PC-3 (cell line): ENCODE measurements at regions of chr11 and their contacts with region 1.

Region 1: DNA sequence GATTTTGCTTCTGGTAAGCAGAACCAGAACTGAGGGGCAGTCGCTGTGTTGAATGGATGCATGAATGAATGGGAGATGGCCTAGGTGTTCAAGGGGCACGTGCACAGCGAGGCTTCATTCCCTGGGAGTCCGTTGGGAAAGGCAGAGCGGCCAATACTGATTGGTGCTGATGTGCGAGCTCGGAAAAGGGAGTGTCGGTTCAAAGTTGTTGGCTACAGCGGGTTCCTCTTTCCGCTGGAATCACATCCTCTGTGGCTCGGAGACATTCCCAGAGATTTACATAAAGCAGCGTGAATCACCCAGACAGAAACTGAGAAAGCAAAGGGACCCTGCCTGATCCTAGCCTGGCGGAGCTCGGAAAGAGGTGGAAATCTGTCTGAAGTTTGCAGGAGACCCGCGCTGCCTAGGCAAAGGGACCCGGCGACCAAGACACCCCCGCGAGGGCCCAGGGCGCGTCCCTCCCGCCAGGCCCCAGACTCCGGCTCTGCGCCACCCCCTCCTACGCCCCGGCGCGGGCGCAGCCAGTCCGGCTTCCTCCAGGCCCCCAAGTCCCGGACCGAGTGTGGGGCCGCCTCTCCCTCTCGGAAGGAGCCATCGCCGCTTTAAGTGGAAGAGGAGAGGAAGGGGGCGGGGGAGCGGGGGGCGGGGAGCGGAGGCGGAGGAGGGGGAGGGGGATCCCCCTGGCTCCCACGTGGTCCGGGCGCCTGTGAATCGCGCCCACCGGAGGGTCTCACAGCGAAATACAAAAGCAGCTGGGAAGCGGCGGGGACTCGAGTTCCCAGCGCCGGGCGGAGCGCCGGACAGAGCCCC is at the start of gene FJX1:
- DNase-seq: peak; percentile 86
- ATAC-seq: peak; percentile 46
- H3K4me3 ChIP-seq: peak within 1 kb of the TSS; percentile 88
- H3K27ac ChIP-seq: peak within 1 kb of the TSS; percentile 93
- H3K4me1 ChIP-seq: peaks cover 53% of the 10 kb centered on the region
- H3K27me3 ChIP-seq: no peaks in the 10 kb centered on the region
- CTCF ChIP-seq: no peak
- total RNA-seq, gene FJX1: 71.4 and 97.1 TPM in 2 replicates

Region 2: GRCh38 chr11:34300026-34300925 is 1317.6 kb before region 1 on chr11:
- CTCF ChIA-PET with region 1: no interaction called
- POLR2A ChIA-PET with region 1: no interaction called
- intact Hi-C with region 1: no loop called
- DNase-seq: no peak
- ATAC-seq: no peak
- H3K4me3 ChIP-seq: no peak overlapping the region
- H3K27ac ChIP-seq: no peak overlapping the region
- H3K4me1 ChIP-seq: peaks cover 28% of the 10 kb centered on the region
- H3K27me3 ChIP-seq: no peaks in the 10 kb centered on the region
- CTCF ChIP-seq: no peak

Region 3: DNA sequence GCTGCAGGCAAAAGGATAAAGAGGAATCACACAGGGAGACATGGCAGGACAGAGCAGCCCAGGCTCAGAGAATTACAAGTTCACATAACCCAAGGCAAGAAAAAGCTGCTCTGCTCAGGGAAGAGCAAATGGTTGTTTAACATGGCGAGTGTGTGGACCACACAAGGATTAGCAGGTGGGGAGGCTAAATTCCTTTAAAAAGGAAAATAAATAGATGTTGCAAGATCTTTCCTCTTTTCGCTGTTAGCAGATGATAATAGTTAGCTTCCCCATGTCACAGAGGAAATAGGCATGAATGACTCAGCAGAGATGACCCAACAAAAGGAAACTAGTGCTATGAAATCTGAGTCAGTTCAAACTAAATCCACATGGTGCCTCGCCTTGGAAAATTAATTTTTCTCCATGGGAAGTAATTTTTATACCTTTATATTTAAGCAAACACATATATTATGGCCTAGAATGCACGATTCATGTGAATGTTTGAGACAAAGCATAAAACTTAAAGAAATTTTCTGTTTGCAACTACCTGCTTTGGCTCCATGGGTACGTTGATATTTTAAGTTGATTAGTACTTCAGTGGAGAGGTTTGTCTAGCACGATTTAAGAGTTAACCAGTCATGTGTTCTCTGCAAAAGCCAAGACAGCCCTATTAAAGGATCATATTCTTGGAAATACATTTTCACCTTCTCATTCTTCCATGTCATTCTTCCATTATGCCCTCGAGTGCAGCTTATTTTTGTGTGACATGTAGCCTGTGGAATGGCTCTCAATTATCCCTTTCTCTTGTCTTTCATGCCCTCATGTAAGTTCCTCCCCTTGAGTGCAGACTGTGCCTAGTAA is 38.1 kb before region 1 on chr11:
- CTCF ChIA-PET with region 1: no interaction called
- POLR2A ChIA-PET with region 1: no interaction called
- intact Hi-C with region 1: no loop called
- DNase-seq: peak; percentile 86
- ATAC-seq: peak; percentile 82
- H3K4me3 ChIP-seq: peak overlapping the region; percentile 54; the same call in 1 of the 2 replicates
- H3K27ac ChIP-seq: peak overlapping the region; percentile 84
- H3K4me1 ChIP-seq: peaks cover 33% of the 10 kb centered on the region
- H3K27me3 ChIP-seq: no peaks in the 10 kb centered on the region
- CTCF ChIP-seq: no peak

Region 4: GRCh38 chr11:35629914-35630313 is 12.0 kb after region 1 on chr11:
- CTCF ChIA-PET with region 1: no interaction called
- POLR2A ChIA-PET with region 1: interaction called, 4 read pairs
- intact Hi-C with region 1: loop called (anchors 1 kb)
- DNase-seq: peak; percentile 99
- ATAC-seq: peak; percentile 97
- H3K4me3 ChIP-seq: no peak overlapping the region
- H3K27ac ChIP-seq: peak overlapping the region; percentile 52
- H3K4me1 ChIP-seq: peaks cover 21% of the 10 kb centered on the region
- H3K27me3 ChIP-seq: no peaks in the 10 kb centered on the region
- CTCF ChIP-seq: no peak

Region 5: GRCh38 chr11:35721651-35722282 is 103.9 kb after region 1 on chr11:
- CTCF ChIA-PET with region 1: no interaction called
- POLR2A ChIA-PET with region 1: no interaction called
- intact Hi-C with region 1: loop called (anchors 5 kb)
- DNase-seq: no peak
- ATAC-seq: no peak
- H3K4me3 ChIP-seq: no peak overlapping the region
- H3K27ac ChIP-seq: no peak overlapping the region
- H3K4me1 ChIP-seq: peaks cover 10% of the 10 kb centered on the region
- H3K27me3 ChIP-seq: no peaks in the 10 kb centered on the region
- CTCF ChIP-seq: no peak

Region 6: DNA sequence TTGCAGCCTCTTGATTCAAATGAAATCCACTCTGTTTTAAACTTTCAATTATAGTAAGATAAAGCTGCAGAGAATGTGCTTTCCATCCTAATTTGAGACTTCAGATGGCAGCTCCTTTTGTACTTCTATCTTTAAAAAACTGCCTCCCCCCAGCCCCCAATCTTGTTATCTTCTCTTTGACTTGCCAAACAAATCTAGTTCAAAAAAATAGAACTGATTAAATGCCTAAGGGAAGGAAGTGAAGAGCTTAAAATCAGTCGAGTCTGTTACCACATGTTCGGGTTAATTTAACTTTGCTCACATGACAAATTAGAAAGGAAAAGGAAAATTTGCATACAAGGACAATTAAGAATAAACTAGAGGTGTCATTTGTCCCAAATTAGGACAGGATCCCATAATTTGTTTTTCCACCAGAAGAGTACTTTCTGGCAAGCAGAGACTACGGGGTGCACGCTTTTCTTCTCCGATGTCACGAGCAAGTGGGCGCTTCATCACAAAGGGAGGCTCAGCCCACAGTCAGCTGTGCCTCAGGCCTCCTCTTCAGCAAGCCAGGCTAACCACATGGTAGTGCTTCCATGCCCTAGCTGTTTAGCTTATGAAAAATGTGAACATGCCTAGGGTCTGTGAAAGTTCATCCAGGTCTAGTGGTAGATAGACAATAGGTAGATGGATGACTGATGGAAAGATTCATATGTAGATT is 257.0 kb after region 1 on chr11:
- CTCF ChIA-PET with region 1: no interaction called
- POLR2A ChIA-PET with region 1: no interaction called
- intact Hi-C with region 1: loop called (anchors 5 kb)
- DNase-seq: no peak
- ATAC-seq: no peak
- H3K4me3 ChIP-seq: no peak overlapping the region
- H3K27ac ChIP-seq: no peak overlapping the region
- H3K4me1 ChIP-seq: peaks cover 7% of the 10 kb centered on the region; the same call in 1 of the 2 replicates
- H3K27me3 ChIP-seq: no peaks in the 10 kb centered on the region
- CTCF ChIP-seq: no peak

Region 7: DNA sequence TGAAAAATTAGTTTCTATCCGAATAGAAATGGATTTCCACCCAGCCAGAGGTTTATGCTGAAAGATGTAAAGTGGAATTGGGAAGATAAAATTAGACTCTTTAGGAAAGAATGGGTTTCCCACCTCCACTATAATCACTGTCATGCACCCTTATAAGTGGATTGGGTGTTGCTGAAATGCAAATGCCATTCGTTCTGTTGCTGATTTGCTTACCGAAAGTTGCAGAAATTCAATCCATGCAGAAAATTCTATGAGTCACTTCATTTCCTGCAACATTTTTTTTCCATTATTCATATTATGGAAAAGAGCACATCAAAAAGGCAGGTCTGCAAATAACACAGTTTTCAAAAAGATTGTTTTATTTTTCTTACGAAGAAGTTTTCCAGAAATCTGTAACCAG is 391.6 kb after region 1 on chr11:
- CTCF ChIA-PET with region 1: no interaction called
- POLR2A ChIA-PET with region 1: no interaction called
- intact Hi-C with region 1: loop called (anchors 5 kb)
- DNase-seq: peak; percentile 69
- ATAC-seq: peak; percentile 29
- H3K4me3 ChIP-seq: peak overlapping the region; percentile 47
- H3K27ac ChIP-seq: peak overlapping the region; percentile 68
- H3K4me1 ChIP-seq: peaks cover 66% of the 10 kb centered on the region
- H3K27me3 ChIP-seq: no peaks in the 10 kb centered on the region
- CTCF ChIP-seq: no peak

Region 8: GRCh38 chr11:36149538-36150242 is 531.8 kb after region 1 on chr11:
- CTCF ChIA-PET with region 1: interaction called, 3 read pairs
- POLR2A ChIA-PET with region 1: no interaction called
- intact Hi-C with region 1: loop called (anchors 1 kb)
- DNase-seq: peak; percentile 99
- ATAC-seq: peak; percentile 96
- H3K4me3 ChIP-seq: peak overlapping the region; percentile 10; the same call in 1 of the 2 replicates
- H3K27ac ChIP-seq: peak overlapping the region; percentile 70
- H3K4me1 ChIP-seq: peaks cover 29% of the 10 kb centered on the region
- H3K27me3 ChIP-seq: no peaks in the 10 kb centered on the region
- CTCF ChIP-seq: peak; percentile 79